Gastrocnemius medialis (tissue), 4 donors: ENCODE measurements at regions of chr9 and their contacts with region 1.

Region 1: GRCh38 chr9:96854073-96854876 is at the start of gene ZNF782:
- DNase-seq: peak; percentile 90 to 91
- ATAC-seq: peak; percentile 97
- H3K4me3 ChIP-seq: peak within 1 kb of the TSS; percentile 70 to 91 (median 88)
- H3K27ac ChIP-seq: peak within 1 kb of the TSS; percentile 81 to 93 (median 89)
- H3K4me1 ChIP-seq: peaks cover 26% of the 10 kb centered on the region in 2 donors
- H3K27me3 ChIP-seq: no peaks in the 10 kb centered on the region
- CTCF ChIP-seq: no peak
- POLR2A ChIP-seq: peak; percentile 81 to 82
- total RNA-seq, gene ZNF782: 4.0 to 8.4 (median 5.6) TPM

Region 2: GRCh38 chr9:96449845-96450612 is 404.2 kb before region 1 on chr9 and contains the start of gene HABP4:
- in situ Hi-C with region 1: loop called in 1 of 4 experiments (anchors 25 kb)
- intact Hi-C with region 1: loop called (anchors 10 kb)
- DNase-seq: peak; percentile 94
- ATAC-seq: peak; percentile 95 to 96
- H3K4me3 ChIP-seq: peak within 1 kb of the TSS; percentile 71 to 85 (median 76)
- H3K27ac ChIP-seq: peak within 1 kb of the TSS; percentile 78 to 88 (median 87)
- H3K4me1 ChIP-seq: peaks cover 7 to 10% of the 10 kb centered on the region in 2 donors
- H3K27me3 ChIP-seq: no peaks in the 10 kb centered on the region
- CTCF ChIP-seq: peak in 2 of 5 experiments; percentile 5 to 20
- POLR2A ChIP-seq: peak; percentile 94 to 95
- total RNA-seq, gene HABP4: 6.2 to 19.3 (median 12.3) TPM

Region 3: DNA sequence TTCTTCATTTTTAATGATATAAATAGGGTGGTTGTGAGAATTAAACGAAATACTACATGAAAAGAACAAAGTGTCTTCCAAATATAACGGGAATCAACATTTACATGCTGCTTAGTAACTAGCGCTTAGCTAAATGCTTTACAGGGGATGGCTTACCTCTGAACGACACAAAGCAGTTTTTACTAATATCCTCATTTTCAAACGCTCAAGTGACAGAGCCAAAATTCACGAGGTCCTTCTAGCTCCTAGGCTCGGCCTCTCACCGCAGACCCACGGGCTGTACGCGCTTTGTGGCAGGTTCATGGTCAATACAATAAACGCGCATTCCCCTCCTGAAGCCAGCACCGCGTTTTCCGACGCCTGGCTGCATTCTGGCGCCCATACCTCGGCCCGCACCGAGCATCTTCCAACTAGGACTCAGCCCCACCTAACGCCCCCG is 76.8 kb before region 1 on chr9:
- in situ Hi-C with region 1: no loop called
- intact Hi-C with region 1: loop called (anchors 5 kb)
- DNase-seq: no peak
- ATAC-seq: peak in 1 of 2 donors; percentile 16
- H3K4me3 ChIP-seq: peak overlapping the region; percentile 81 to 94 (median 82)
- H3K27ac ChIP-seq: peak overlapping the region; percentile 80 to 90 (median 86)
- H3K4me1 ChIP-seq: peaks cover 7 to 18% of the 10 kb centered on the region in 2 donors
- H3K27me3 ChIP-seq: no peaks in the 10 kb centered on the region
- CTCF ChIP-seq: no peak
- POLR2A ChIP-seq: no peak

Region 4: GRCh38 chr9:97237951-97238851 is 383.9 kb after region 1 on chr9:
- in situ Hi-C with region 1: loop called in 1 of 4 experiments (anchors 25 kb)
- intact Hi-C with region 1: no loop called
- DNase-seq: peak; percentile 57 to 67
- ATAC-seq: peak; percentile 90 to 93
- H3K4me3 ChIP-seq: peak overlapping the region; percentile 71 to 79 (median 76)
- H3K27ac ChIP-seq: peak overlapping the region; percentile 57 to 80 (median 70)
- H3K4me1 ChIP-seq: peaks cover 7 to 10% of the 10 kb centered on the region in 2 donors
- H3K27me3 ChIP-seq: no peaks in the 10 kb centered on the region
- CTCF ChIP-seq: no peak
- POLR2A ChIP-seq: no peak

Region 5: GRCh38 chr9:97398999-97399758 is 544.9 kb after region 1 on chr9:
- in situ Hi-C with region 1: loop called in 3 of 4 experiments (anchors 25 kb)
- intact Hi-C with region 1: loop called (anchors 5 kb)
- DNase-seq: peak in 1 of 2 donors; percentile 30
- ATAC-seq: no peak
- H3K4me3 ChIP-seq: no peak overlapping the region
- H3K27ac ChIP-seq: no peak overlapping the region
- H3K4me1 ChIP-seq: no peaks in the 10 kb centered on the region
- H3K27me3 ChIP-seq: peaks cover 0 to 5% (median 0%) of the 10 kb centered on the region in 3 donors
- CTCF ChIP-seq: peak; percentile 32 to 75 (median 61)
- POLR2A ChIP-seq: no peak

Region 6: DNA sequence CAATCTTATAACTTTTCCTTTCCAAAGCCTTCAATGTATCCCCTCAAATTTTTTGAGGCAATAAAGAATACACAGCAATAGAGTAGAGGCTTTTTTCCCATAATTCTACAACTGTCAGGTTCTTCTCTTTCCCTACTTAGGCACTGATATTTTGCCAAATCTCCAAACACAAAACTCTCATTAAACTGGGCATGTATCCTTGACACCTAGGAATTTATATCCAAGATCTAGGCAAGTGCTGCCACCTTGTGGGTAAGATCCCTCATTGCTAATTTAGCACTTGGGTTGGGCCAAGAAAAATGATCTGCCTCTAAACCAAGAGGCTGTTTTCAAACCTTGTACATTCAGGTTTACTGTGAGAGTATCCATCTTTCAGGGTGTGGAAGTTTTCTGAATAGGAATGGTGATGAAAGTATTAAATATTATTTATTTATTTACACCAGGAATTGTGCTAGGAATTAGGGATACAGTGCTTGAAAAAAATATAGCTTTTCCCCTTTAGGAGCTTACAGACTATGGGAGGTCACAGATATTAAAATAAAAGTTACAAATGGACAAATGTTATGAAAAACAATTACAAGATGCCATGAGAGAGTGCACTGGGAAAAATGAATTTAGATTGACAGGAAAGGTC is 761.3 kb after region 1 on chr9:
- in situ Hi-C with region 1: loop called in 1 of 4 experiments (anchors 25 kb)
- intact Hi-C with region 1: no loop called
- DNase-seq: peak in 1 of 2 donors; percentile 64
- ATAC-seq: peak; percentile 64 to 79
- H3K4me3 ChIP-seq: no peak overlapping the region
- H3K27ac ChIP-seq: peak overlapping the region in 1 of 4 donors; percentile 39
- H3K4me1 ChIP-seq: peaks cover 0 to 8% of the 10 kb centered on the region in 2 donors
- H3K27me3 ChIP-seq: no peaks in the 10 kb centered on the region
- CTCF ChIP-seq: peak; percentile 83 to 87 (median 86)
- POLR2A ChIP-seq: no peak